Caco-2 (cell line): ENCODE measurements at regions of chr22 and their contacts with region 1.

Region 1: GRCh38 chr22:26318975-26319374 is 110.1 kb upstream of the ASPHD2 start:
- DNase-seq: peak in 1 of 2 experiments; percentile 24
- H3K4me3 ChIP-seq: no peak overlapping the region
- H3K4me3 Mint-ChIP-seq: no peak overlapping the region
- H3K27ac Mint-ChIP-seq: no peak overlapping the region
- H3K4me1 ChIP-seq: no peaks in the 10 kb centered on the region
- H3K4me1 Mint-ChIP-seq: no peaks in the 10 kb centered on the region
- H3K27me3 ChIP-seq: no peaks in the 10 kb centered on the region
- H3K27me3 Mint-ChIP-seq: peaks cover 18% of the 10 kb centered on the region
- CTCF ChIP-seq: peak in 1 of 2 experiments; percentile 52

Region 2: GRCh38 chr22:26172389-26172990 is 146.5 kb before region 1 on chr22:
- CTCF ChIA-PET with region 1: no interaction called
- POLR2A ChIA-PET with region 1: no interaction called
- intact Hi-C with region 1: loop called (anchors 1 kb)
- DNase-seq: peak; percentile 67 to 68
- H3K4me3 ChIP-seq: no peak overlapping the region
- H3K4me3 Mint-ChIP-seq: no peak overlapping the region
- H3K27ac Mint-ChIP-seq: no peak overlapping the region
- H3K4me1 ChIP-seq: no peaks in the 10 kb centered on the region
- H3K4me1 Mint-ChIP-seq: no peaks in the 10 kb centered on the region
- H3K27me3 ChIP-seq: no peaks in the 10 kb centered on the region; the same call in 1 of the 2 replicates
- H3K27me3 Mint-ChIP-seq: peaks cover 9% of the 10 kb centered on the region
- CTCF ChIP-seq: peak; percentile 67 to 84